Activated T-helper 1 cell treated with anti-CD3 and anti-CD28 coated beads, Interleukin-12 subunit alpha, Interleukin-12 subunit beta, Interleukin-2, Interleukin-4 antibody, amounts not matched to agents 30 ng/mL and 10 ng/mL and 1 ng/mL, durations not matched to agents 14 hours and 24 hours and 36 hours (primary cell): ENCODE measurements at regions of chr15 and their contacts with region 1.

Region 1: GRCh38 chr15:39580117-39580484 is 778 bp upstream of the THBS1 start:
- DNase-seq: peak; percentile 83
- H3K4me3 Mint-ChIP-seq: peak overlapping the region; percentile 84
- H3K27ac Mint-ChIP-seq: no peak overlapping the region
- H3K4me1 Mint-ChIP-seq: peaks cover 24% of the 10 kb centered on the region
- H3K27me3 Mint-ChIP-seq: peaks cover 58% of the 10 kb centered on the region

Region 2: GRCh38 chr15:38440353-38441129 is 1139.6 kb before region 1 on chr15:
- intact Hi-C with region 1: loop called (anchors 1 kb)
- DNase-seq: peak; percentile 38
- H3K4me3 Mint-ChIP-seq: no peak overlapping the region
- H3K27ac Mint-ChIP-seq: peak overlapping the region; percentile 56
- H3K4me1 Mint-ChIP-seq: peaks cover 18% of the 10 kb centered on the region
- H3K27me3 Mint-ChIP-seq: peaks cover 50% of the 10 kb centered on the region

Region 3: DNA sequence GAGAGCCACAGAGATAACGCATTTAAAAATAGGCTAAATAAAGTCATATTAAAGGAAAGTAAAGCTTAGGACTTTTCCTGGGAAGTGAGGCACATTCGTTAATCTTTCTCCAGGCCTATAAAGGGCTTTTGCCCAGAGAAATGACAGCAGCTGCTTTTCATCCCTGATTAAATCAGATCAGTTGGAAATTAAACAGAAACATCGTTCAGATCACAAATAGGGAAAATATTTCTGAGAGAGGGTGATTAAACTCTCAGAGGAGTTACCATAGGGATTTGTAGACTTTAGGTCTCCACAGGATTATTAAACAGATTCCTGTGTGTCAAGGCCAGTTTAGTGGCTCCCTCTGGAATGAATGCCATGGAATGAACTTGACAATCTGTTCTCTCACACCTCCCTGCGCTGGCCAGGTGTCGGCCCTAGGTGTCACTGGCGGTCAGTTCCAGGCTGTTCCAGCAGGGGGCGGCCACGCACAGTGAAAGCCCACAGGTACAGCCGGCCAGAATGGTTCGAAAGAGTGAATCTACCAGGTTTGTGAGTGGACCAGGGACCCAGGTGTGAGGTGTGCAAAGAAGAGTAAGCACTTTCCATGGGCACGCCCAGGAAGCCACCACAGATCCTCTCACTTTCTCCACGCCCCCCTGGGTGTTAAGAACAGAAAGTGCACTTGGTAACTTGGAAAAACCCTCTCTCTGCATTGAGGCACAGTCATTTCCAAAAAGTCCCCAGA is 762.5 kb before region 1 on chr15:
- intact Hi-C with region 1: loop called (anchors 1 kb)
- DNase-seq: peak; percentile 66
- H3K4me3 Mint-ChIP-seq: no peak overlapping the region
- H3K27ac Mint-ChIP-seq: no peak overlapping the region
- H3K4me1 Mint-ChIP-seq: peaks cover 4% of the 10 kb centered on the region
- H3K27me3 Mint-ChIP-seq: peaks cover 14% of the 10 kb centered on the region

Region 4: DNA sequence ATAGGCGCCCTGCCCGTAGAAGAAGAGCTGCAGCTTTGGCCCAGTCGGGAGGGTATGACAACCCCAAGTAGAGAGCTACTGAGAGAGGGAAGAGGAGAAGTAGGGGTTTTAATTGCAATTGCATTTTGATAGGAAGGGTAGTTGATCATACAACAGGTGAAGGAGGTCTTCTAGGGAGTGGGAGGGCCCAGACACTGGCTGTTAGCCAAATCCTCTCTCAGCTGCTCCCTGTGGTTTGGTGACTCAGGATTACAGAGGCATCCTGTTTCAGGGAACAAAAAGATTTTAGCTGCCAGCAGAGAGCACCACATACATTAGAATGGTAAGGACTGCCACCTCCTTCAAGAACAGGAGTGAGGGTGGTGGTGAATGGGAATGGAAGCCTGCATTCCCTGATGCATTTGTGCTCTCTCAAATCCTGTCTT is 408.1 kb before region 1 on chr15:
- intact Hi-C with region 1: loop called (anchors 1 kb)
- DNase-seq: no peak
- H3K4me3 Mint-ChIP-seq: no peak overlapping the region
- H3K27ac Mint-ChIP-seq: no peak overlapping the region
- H3K4me1 Mint-ChIP-seq: no peaks in the 10 kb centered on the region
- H3K27me3 Mint-ChIP-seq: peaks cover 14% of the 10 kb centered on the region

Region 5: DNA sequence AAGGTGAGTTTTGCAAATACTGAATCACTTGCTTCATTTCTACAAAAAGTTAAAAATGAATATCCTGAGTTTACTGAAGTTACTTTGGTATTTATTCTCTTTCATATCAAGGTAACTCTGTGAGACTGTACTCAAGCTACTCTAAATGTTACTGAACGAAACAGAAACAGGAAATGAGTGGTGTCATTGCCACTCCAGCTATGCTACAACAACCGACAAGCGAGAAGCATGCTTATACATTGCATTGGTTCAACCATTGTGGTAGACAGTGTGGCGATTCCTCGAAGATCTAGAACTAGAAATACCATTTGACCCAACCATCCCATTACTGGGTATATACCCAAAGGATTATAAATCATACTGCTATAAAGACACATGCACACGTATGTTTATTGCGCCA is 312.4 kb before region 1 on chr15:
- intact Hi-C with region 1: no loop called
- DNase-seq: no peak
- H3K4me3 Mint-ChIP-seq: no peak overlapping the region
- H3K27ac Mint-ChIP-seq: no peak overlapping the region
- H3K4me1 Mint-ChIP-seq: peaks cover 4% of the 10 kb centered on the region
- H3K27me3 Mint-ChIP-seq: peaks cover 2% of the 10 kb centered on the region

Region 6: DNA sequence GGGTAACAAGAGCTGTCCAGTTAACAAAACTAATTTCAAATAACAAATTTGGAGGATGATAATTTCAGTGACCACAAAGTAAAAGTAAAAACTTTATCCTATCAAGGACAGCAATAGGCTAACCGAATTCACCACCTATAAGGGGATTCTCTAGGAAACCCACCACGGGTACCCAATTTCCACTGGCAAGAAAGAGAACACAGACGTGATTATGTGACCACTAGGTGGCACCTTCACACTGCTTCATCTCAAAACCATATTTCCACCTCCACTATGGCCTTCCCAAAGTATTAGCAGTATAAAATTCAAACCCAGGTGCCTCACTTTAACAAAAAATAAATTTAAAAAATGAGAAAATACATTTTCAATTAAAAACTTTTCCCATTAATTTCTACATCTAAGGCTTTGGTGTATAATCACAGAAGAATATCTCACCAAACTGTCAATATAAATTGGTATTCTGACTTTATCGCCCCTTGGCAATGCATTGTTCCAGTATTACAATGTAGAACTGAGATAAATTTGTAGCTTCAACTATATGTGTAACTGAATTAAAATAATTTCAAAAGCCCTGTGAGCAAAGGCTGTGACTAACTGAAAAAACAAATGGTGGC is 106.0 kb after region 1 on chr15:
- intact Hi-C with region 1: loop called (anchors 2 kb)
- DNase-seq: no peak
- H3K4me3 Mint-ChIP-seq: no peak overlapping the region
- H3K27ac Mint-ChIP-seq: no peak overlapping the region
- H3K4me1 Mint-ChIP-seq: peaks cover 13% of the 10 kb centered on the region
- H3K27me3 Mint-ChIP-seq: peaks cover 14% of the 10 kb centered on the region